K562 (cell line): ENCODE measurements at regions of chr6 and their contacts with region 1.

Region 1: GRCh38 chr6:39416728-39417127 is 94.2 kb upstream of the KCNK16 start:
- DNase-seq: no peak
- ATAC-seq: no peak
- H3K4me3 ChIP-seq: no peak overlapping the region
- H3K27ac ChIP-seq: no peak overlapping the region
- H3K4me1 ChIP-seq: no peaks in the 10 kb centered on the region
- H3K27me3 ChIP-seq: peaks cover 3 to 7% of the 10 kb centered on the region in 2 experiments; a peak in 4 of 5 replicates
- CTCF ChIP-seq: no peak
- EP300 ChIP-seq: no peak
- POLR2A ChIP-seq: no peak
- RAD21 ChIP-seq: no peak

Region 2: DNA sequence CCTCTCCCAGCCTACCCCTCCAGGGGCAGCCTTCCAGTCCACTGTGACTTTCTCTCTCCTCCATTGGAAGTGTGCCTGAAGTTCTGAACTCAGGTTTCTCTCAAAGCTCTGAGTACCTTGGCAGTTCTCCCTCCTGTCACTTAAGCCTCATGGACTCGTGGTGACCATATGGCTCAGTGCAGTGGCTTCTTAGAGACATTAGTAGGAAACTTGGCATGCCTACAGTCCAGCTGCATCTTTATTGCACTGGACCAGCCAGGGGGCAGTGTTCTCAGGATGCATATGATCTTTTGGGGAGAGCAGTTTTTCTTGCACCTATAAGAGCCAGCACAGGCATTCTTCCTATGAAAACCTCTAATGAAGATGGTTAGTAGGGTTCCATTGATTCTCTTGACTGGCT is 46.7 kb before region 1 on chr6:
- CTCF ChIA-PET with region 1: no interaction called
- POLR2A ChIA-PET with region 1: no interaction called
- in situ Hi-C with region 1: loop called (anchors 5 kb)
- intact Hi-C with region 1: no loop called
- DNase-seq: no peak
- ATAC-seq: 0 out of 3 replicates have a peak, but pooled peaks have one; percentile 27
- H3K4me3 ChIP-seq: no peak overlapping the region
- H3K27ac ChIP-seq: no peak overlapping the region
- H3K4me1 ChIP-seq: no peaks in the 10 kb centered on the region
- H3K27me3 ChIP-seq: peaks cover 7 to 40% of the 10 kb centered on the region in 2 experiments; a peak in 4 of 5 replicates
- CTCF ChIP-seq: 0 out of 6 replicates have a peak, but pooled peaks of 2 of the 3 experiments have one; percentile 10 to 23
- EP300 ChIP-seq: no peak
- POLR2A ChIP-seq: no peak
- RAD21 ChIP-seq: no peak